GM12878 (cell line): ENCODE measurements at regions of chrX and their contacts with region 1.

Region 1: DNA sequence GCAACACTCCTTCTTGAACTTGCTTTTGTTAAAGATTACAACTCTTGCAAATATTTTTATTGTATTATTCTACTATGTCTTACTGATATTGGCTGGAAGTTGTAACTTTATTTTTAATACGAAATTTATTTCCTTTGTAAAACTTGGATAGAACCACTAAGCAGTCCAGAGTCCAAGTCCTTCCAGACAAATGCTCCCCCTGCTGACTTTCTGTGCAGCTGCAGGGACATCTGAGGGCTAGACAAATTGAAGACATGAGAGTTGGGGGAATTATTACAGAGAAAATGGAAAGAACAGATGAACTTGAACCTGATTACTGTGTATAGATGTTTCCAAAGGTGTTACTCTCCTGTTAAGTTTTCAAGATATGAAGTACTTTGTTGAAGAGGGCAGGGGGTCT is 238.8 kb downstream of the GRIA3 start:
- DNase-seq: no peak
- ATAC-seq: peak; percentile 77
- H3K4me3 ChIP-seq: no peak overlapping the region
- H3K27ac ChIP-seq: no peak overlapping the region
- H3K4me1 ChIP-seq: peaks cover 4% of the 10 kb centered on the region; the same call in 1 of the 2 replicates
- H3K27me3 ChIP-seq: no peaks in the 10 kb centered on the region
- CTCF ChIP-seq: peak; percentile 60 to 78 (median 69)
- EP300 ChIP-seq: no peak
- POLR2A ChIP-seq: no peak
- RAD21 ChIP-seq: peak; percentile 87

Region 2: GRCh38 chrX:123184219-123184857 is 238.5 kb before region 1 on chrX and contains the start of gene GRIA3:
- CTCF ChIA-PET with region 1: interaction called, 5 read pairs
- POLR2A ChIA-PET with region 1: no interaction called
- RAD21 ChIA-PET with region 1: no interaction called
- SMC1A ChIA-PET with region 1: no interaction called
- in situ Hi-C with region 1: loop called (anchors 10 kb)
- intact Hi-C with region 1: no loop called
- DNase-seq: no peak
- ATAC-seq: no peak
- H3K4me3 ChIP-seq: no peak within 1 kb of the TSS
- H3K27ac ChIP-seq: no peak within 1 kb of the TSS
- H3K4me1 ChIP-seq: no peaks in the 10 kb centered on the region
- H3K27me3 ChIP-seq: no peaks in the 10 kb centered on the region
- CTCF ChIP-seq: no peak
- EP300 ChIP-seq: no peak
- POLR2A ChIP-seq: no peak
- RAD21 ChIP-seq: no peak
- polyA plus RNA-seq, gene GRIA3: 2.2 to 4.3 TPM

Region 3: DNA sequence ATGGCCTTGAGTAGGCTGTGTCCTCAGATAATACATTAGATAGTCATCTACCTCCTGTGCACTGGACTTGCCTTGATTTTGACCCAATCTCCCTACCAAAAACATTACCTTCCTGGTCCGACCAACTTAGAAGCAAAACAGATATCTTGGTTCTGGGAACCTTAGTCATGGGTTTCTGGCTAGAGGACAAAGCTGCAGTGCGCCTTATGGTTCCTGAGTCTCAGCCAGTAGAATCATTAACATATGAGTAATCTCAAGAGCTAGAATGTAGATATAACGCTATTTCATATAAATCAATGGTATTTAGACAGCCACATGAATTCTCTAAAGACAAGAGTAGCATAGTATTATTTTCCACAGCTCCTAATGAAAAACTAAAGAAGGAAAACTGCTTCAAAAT is 155.7 kb before region 1 on chrX:
- CTCF ChIA-PET with region 1: interaction called, 9 read pairs
- POLR2A ChIA-PET with region 1: no interaction called
- RAD21 ChIA-PET with region 1: interaction called, 3 read pairs
- SMC1A ChIA-PET with region 1: interaction called, 13 read pairs
- in situ Hi-C with region 1: no loop called
- intact Hi-C with region 1: no loop called
- DNase-seq: no peak
- ATAC-seq: no peak
- H3K4me3 ChIP-seq: no peak overlapping the region
- H3K27ac ChIP-seq: no peak overlapping the region
- H3K4me1 ChIP-seq: no peaks in the 10 kb centered on the region
- H3K27me3 ChIP-seq: no peaks in the 10 kb centered on the region
- CTCF ChIP-seq: no peak
- EP300 ChIP-seq: no peak
- POLR2A ChIP-seq: no peak
- RAD21 ChIP-seq: no peak

Region 4: DNA sequence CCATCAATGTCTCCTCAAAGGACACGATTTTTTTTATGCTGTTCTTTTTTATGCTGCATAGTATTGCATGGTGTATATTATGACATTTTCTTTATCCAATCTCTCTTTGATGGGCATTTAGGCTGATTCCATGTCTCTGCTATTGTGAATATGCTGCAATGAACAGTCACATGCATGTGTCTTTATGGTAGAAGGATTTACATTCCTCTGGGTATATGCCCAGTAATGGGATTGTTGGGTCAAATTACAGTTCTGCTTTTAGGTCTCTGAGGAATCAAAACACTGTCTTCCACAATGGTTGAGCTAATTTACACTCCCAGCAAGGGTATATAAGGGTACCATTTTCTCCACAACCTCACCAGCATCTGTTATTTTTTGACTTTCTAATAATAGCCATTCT is 124.9 kb before region 1 on chrX:
- CTCF ChIA-PET with region 1: interaction called, 5 read pairs
- POLR2A ChIA-PET with region 1: no interaction called
- RAD21 ChIA-PET with region 1: no interaction called
- SMC1A ChIA-PET with region 1: interaction called, 12 read pairs
- in situ Hi-C with region 1: no loop called
- intact Hi-C with region 1: no loop called
- DNase-seq: no peak
- ATAC-seq: no peak
- H3K4me3 ChIP-seq: no peak overlapping the region
- H3K27ac ChIP-seq: no peak overlapping the region
- H3K4me1 ChIP-seq: no peaks in the 10 kb centered on the region
- H3K27me3 ChIP-seq: no peaks in the 10 kb centered on the region
- CTCF ChIP-seq: no peak
- EP300 ChIP-seq: no peak
- POLR2A ChIP-seq: no peak
- RAD21 ChIP-seq: no peak

Region 5: DNA sequence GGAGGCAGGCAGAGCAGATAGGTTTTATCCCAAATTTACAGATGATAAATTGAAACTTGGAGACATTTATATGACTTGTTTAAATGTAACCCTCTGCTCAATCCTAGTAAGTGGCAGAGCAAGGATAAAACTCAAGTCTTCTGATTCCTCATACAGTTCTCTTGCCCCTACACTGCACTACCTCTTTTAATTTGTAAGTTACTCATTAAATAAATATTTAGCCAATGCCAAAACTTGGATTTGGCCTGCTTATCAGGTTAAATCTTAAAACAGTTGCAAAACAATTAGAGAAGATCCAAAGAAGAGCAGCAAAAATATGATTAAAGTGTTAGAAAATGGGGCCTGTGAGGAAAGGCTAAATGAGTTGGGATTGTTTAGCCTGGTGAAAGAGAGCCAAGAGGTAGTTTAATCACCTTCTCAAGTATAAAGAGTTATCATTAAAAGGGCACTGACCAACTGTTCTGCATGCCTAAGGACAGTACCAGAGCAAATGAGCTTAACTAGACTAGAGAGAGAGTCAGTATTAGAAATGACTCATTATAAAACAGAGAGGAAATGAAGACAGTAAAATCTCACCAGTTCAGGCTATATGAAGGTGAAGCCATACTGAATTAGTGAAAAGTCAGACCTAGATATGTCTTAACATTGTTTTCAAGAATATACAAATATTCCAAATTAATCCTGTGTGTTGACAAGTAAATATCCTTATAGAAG is 92.5 kb before region 1 on chrX:
- CTCF ChIA-PET with region 1: interaction called, 57 read pairs
- POLR2A ChIA-PET with region 1: no interaction called
- RAD21 ChIA-PET with region 1: interaction called, 20 read pairs
- SMC1A ChIA-PET with region 1: interaction called, 19 read pairs
- in situ Hi-C with region 1: no loop called
- intact Hi-C with region 1: no loop called
- DNase-seq: no peak
- ATAC-seq: peak; percentile 97
- H3K4me3 ChIP-seq: no peak overlapping the region
- H3K27ac ChIP-seq: no peak overlapping the region
- H3K4me1 ChIP-seq: peaks cover 6% of the 10 kb centered on the region
- H3K27me3 ChIP-seq: no peaks in the 10 kb centered on the region
- CTCF ChIP-seq: no peak
- EP300 ChIP-seq: no peak
- POLR2A ChIP-seq: no peak
- RAD21 ChIP-seq: no peak

Region 6: GRCh38 chrX:123357941-123358340 is 64.9 kb before region 1 on chrX:
- CTCF ChIA-PET with region 1: interaction called, 59 read pairs
- POLR2A ChIA-PET with region 1: interaction called, 9 read pairs
- RAD21 ChIA-PET with region 1: interaction called, 97 read pairs
- SMC1A ChIA-PET with region 1: interaction called, 103 read pairs
- in situ Hi-C with region 1: no loop called
- intact Hi-C with region 1: no loop called
- DNase-seq: peak; percentile 41
- ATAC-seq: peak; percentile 95
- H3K4me3 ChIP-seq: no peak overlapping the region
- H3K27ac ChIP-seq: no peak overlapping the region; the same call in 1 of the 2 replicates
- H3K4me1 ChIP-seq: no peaks in the 10 kb centered on the region
- H3K27me3 ChIP-seq: no peaks in the 10 kb centered on the region
- CTCF ChIP-seq: no peak
- EP300 ChIP-seq: peak in 1 of 2 experiments; percentile 61; a peak in 1 of 4 replicates
- POLR2A ChIP-seq: no peak
- RAD21 ChIP-seq: 0 out of 2 replicates have a peak, but pooled peaks have one; percentile 5

Region 7: GRCh38 chrX:123408821-123409737 is 13.8 kb before region 1 on chrX:
- CTCF ChIA-PET with region 1: interaction called, 115 read pairs
- POLR2A ChIA-PET with region 1: interaction called, 3 read pairs
- RAD21 ChIA-PET with region 1: interaction called, 79 read pairs
- SMC1A ChIA-PET with region 1: interaction called, 172 read pairs
- in situ Hi-C with region 1: no loop called
- intact Hi-C with region 1: no loop called
- DNase-seq: peak; percentile 57
- ATAC-seq: peak; percentile 77
- H3K4me3 ChIP-seq: no peak overlapping the region; the same call in 1 of the 2 replicates
- H3K27ac ChIP-seq: peak overlapping the region; percentile 86
- H3K4me1 ChIP-seq: peaks cover 16% of the 10 kb centered on the region
- H3K27me3 ChIP-seq: no peaks in the 10 kb centered on the region
- CTCF ChIP-seq: no peak
- EP300 ChIP-seq: peak in 1 of 2 experiments; percentile 36; a peak in 2 of 4 replicates
- POLR2A ChIP-seq: no peak
- RAD21 ChIP-seq: no peak